B cell (primary cell): ENCODE measurements at regions of chr10 and their contacts with region 1.

Region 1: DNA sequence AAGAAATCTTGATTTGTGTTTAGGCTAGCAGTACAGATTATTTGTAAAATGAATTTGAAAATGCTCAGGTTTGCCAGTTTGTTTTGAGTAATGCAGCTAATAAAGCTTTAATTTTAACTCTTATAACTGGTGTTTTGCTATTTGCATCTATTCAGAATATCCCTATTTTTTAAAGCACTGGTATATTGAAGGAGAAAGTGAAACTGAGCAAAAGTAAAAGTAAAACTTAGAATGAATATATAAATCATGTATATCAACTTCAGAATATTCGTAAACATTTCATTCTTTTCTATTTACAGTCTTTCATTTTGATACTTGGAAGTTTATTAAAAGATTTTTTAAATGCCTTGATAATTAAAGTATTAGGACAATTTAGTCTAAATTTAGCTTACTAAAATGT is 26.2 kb downstream of the TASOR2 start:
- DNase-seq: no peak
- ATAC-seq: no peak
- H3K4me3 ChIP-seq: peak overlapping the region in 3 of 5 experiments; percentile 25 to 60 (median 26)
- H3K4me3 Mint-ChIP-seq: peak overlapping the region; percentile 17
- H3K27ac ChIP-seq: peak overlapping the region in 1 of 2 donors; percentile 43
- H3K27ac Mint-ChIP-seq: no peak overlapping the region
- H3K4me1 ChIP-seq: peaks cover 4 to 27% of the 10 kb centered on the region in 2 donors
- H3K4me1 Mint-ChIP-seq: peaks cover 51% of the 10 kb centered on the region
- H3K27me3 ChIP-seq: no peaks in the 10 kb centered on the region
- H3K27me3 Mint-ChIP-seq: no peaks in the 10 kb centered on the region
- CTCF ChIP-seq: no peak

Region 2: DNA sequence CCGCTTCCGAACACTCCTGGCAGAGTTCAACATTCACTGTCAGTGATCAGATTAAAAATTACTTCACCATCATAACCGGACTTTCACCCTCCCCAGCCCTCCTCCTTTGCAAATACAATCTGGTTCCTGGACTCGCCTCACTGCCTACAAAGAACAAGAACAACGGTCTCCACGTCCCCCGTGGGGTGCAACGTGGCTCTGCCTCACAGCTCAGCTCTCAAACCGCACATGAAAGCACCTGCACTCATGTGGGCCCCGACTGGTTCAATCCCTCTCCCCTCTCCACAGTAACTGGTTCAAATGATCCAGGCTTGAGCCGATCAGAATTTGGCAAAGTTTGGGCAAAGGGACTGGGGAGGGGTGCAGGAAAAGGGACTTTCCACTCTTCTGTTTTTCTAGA is 65.5 kb before region 1 on chr10:
- CTCF ChIA-PET with region 1: no interaction called
- POLR2A ChIA-PET with region 1: no interaction called
- intact Hi-C with region 1: no loop called
- DNase-seq: peak; percentile 77
- ATAC-seq: peak; percentile 87
- H3K4me3 ChIP-seq: peak overlapping the region in 2 of 5 experiments; percentile 12 to 50
- H3K4me3 Mint-ChIP-seq: peak overlapping the region; percentile 58
- H3K27ac ChIP-seq: peak overlapping the region in 1 of 2 donors; percentile 74
- H3K27ac Mint-ChIP-seq: peak overlapping the region; percentile 64
- H3K4me1 ChIP-seq: peaks cover 21 to 23% of the 10 kb centered on the region in 2 donors
- H3K4me1 Mint-ChIP-seq: peaks cover 28% of the 10 kb centered on the region
- H3K27me3 ChIP-seq: no peaks in the 10 kb centered on the region
- H3K27me3 Mint-ChIP-seq: no peaks in the 10 kb centered on the region
- CTCF ChIP-seq: no peak

Region 3: DNA sequence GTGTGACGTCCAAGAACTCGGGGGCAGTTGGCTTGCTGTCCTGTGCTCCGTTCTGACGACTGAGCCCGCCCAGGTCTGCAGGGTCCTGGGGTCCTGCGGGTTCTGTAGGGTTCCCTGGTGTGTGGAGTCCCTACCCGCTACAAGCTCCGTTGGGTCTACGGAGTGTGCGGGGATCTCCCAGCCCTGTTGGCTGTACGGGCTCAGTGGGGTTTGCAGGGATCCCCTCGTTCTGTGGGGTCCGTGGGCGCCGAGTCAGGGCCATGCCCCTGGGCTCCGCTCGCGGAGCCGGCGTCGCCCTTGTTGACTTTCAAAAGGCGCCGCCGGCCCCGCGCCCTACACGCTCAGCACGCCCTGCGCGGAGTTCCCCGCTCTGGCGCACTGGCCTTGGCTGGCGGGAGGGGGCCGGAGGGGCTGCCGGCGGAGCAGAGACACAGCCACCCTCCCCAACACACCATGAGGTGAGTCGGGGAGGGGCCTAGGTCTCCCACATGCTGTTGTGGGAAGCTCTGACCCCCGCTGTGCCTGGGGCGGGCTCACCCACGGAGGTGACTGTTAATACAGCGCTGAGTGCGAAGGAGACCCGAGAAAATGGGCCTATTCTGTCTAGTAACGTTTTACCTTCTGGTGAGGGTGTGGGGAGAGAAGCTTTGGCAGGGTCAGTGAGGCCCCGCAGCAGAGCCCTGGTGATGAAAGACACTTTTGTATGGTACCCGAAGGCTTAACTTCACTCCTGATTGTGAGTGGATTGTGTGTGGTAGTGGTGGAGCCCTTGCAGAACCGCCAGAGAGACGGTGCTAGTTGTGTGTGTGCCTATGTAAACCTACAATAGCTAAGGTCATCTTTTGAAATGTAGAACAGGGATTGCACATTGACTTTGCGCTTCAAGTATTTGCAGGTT is 18.1 kb before region 1 on chr10:
- CTCF ChIA-PET with region 1: interaction called, 7 read pairs
- POLR2A ChIA-PET with region 1: no interaction called
- intact Hi-C with region 1: loop called (anchors 2 kb)
- DNase-seq: peak; percentile 83
- ATAC-seq: peak; percentile 90
- H3K4me3 ChIP-seq: peak overlapping the region; percentile 8 to 72 (median 54)
- H3K4me3 Mint-ChIP-seq: peak overlapping the region; percentile 92
- H3K27ac ChIP-seq: peak overlapping the region; percentile 40 to 78
- H3K27ac Mint-ChIP-seq: peak overlapping the region; percentile 88
- H3K4me1 ChIP-seq: peaks cover 36 to 55% of the 10 kb centered on the region in 2 donors
- H3K4me1 Mint-ChIP-seq: peaks cover 65% of the 10 kb centered on the region
- H3K27me3 ChIP-seq: no peaks in the 10 kb centered on the region
- H3K27me3 Mint-ChIP-seq: no peaks in the 10 kb centered on the region
- CTCF ChIP-seq: no peak

Region 4: GRCh38 chr10:5698062-5698461 is 12.8 kb before region 1 on chr10:
- CTCF ChIA-PET with region 1: interaction called, 7 read pairs
- POLR2A ChIA-PET with region 1: no interaction called
- intact Hi-C with region 1: loop called (anchors 2 kb)
- DNase-seq: no peak
- ATAC-seq: no peak
- H3K4me3 ChIP-seq: no peak overlapping the region
- H3K4me3 Mint-ChIP-seq: no peak overlapping the region
- H3K27ac ChIP-seq: no peak overlapping the region
- H3K27ac Mint-ChIP-seq: no peak overlapping the region
- H3K4me1 ChIP-seq: peaks cover 17 to 41% of the 10 kb centered on the region in 2 donors
- H3K4me1 Mint-ChIP-seq: peaks cover 49% of the 10 kb centered on the region
- H3K27me3 ChIP-seq: no peaks in the 10 kb centered on the region
- H3K27me3 Mint-ChIP-seq: no peaks in the 10 kb centered on the region
- CTCF ChIP-seq: no peak

Region 5: GRCh38 chr10:5762531-5762930 is 51.7 kb after region 1 on chr10:
- CTCF ChIA-PET with region 1: no interaction called
- POLR2A ChIA-PET with region 1: no interaction called
- intact Hi-C with region 1: no loop called
- DNase-seq: no peak
- ATAC-seq: no peak
- H3K4me3 ChIP-seq: no peak overlapping the region
- H3K4me3 Mint-ChIP-seq: no peak overlapping the region
- H3K27ac ChIP-seq: no peak overlapping the region
- H3K27ac Mint-ChIP-seq: no peak overlapping the region
- H3K4me1 ChIP-seq: no peaks in the 10 kb centered on the region
- H3K4me1 Mint-ChIP-seq: no peaks in the 10 kb centered on the region
- H3K27me3 ChIP-seq: no peaks in the 10 kb centered on the region
- H3K27me3 Mint-ChIP-seq: no peaks in the 10 kb centered on the region
- CTCF ChIP-seq: no peak